Mammary epithelial cell (primary cell): ENCODE measurements at regions of chr15 and their contacts with region 1.

Region 1: DNA sequence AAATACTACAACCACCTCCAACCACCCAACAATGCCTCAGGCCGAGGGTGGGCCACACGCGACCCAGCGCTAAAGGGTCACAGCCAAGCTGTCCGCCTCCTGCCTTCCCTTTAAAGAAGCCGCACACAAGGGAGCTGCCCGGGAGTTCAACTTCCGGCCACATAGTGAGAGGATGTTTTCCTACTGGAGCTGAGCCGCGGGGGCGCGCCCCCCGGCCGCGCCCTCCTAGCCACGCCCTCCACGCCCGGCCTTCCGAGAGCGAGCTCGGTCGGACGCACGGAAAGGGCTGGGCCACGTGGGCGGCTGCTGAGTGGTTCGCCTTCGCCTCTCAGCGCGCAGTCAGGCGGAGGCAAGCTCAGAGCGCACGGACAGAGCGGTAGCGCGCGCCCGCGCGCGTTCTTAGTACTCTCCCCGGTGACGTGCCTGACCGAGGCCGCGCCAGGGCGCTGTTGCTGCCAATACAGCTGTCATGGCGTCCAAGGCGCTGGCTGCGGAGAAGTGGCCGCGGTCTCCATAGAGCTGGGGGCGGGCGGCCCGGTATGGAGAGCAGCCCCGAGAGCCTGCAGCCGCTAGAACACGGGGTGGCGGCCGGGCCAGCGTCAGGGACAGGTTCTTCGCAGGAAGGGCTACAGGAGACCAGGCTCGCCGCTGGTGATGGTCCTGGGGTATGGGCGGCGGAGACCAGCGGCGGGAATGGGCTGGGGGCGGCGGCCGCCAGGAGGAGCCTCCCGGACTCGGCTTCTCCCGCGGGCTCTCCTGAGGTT is at the start of gene MINDY2:
- DNase-seq: peak; percentile 99
- H3K4me3 ChIP-seq: peak within 1 kb of the TSS; percentile 62 to 100 (median 73)
- H3K27ac ChIP-seq: peak within 1 kb of the TSS; percentile 83
- H3K4me1 ChIP-seq: peaks cover 14% of the 10 kb centered on the region
- H3K27me3 ChIP-seq: no peaks in the 10 kb centered on the region
- CTCF ChIP-seq: peak in 1 of 2 donors; percentile 47
- total RNA-seq, gene MINDY2: 17.5 to 30.7 TPM

Region 2: GRCh38 chr15:58440158-58440910 is 330.7 kb before region 1 on chr15:
- CTCF ChIA-PET with region 1: no interaction called
- dilution Hi-C with region 1: no loop called
- in situ Hi-C with region 1: no loop called
- intact Hi-C with region 1: loop called (anchors 10 kb)
- DNase-seq: peak; percentile 52
- H3K4me3 ChIP-seq: no peak overlapping the region
- H3K27ac ChIP-seq: peak overlapping the region; percentile 93
- H3K4me1 ChIP-seq: peaks cover 36% of the 10 kb centered on the region
- H3K27me3 ChIP-seq: no peaks in the 10 kb centered on the region
- CTCF ChIP-seq: no peak

Region 3: DNA sequence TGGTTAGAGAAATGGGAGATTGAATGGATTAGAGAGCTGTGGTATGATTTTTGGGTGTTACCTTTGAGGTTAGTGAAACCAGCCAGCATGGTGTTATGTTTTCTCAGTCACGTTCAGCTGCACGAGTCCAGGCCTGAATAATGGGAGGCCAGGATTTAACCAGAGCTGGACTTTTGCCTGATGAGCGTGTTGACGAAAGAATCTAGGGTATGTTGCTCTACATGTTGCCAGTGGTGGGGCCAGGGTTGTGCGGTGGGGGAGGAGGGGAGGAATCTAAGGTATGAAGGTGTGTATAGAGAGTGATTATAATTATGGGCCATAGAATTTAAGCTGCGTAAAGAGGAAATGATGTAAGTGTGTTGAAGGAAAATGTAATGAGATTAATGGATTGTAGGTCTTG is 22.8 kb after region 1 on chr15:
- CTCF ChIA-PET with region 1: interaction called, 18 read pairs
- dilution Hi-C with region 1: no loop called
- in situ Hi-C with region 1: no loop called
- intact Hi-C with region 1: loop called (anchors 1 kb)
- DNase-seq: peak; percentile 98
- H3K4me3 ChIP-seq: peak overlapping the region in 2 of 3 experiments; percentile 23 to 31
- H3K27ac ChIP-seq: peak overlapping the region; percentile 99
- H3K4me1 ChIP-seq: peaks cover 16% of the 10 kb centered on the region
- H3K27me3 ChIP-seq: no peaks in the 10 kb centered on the region
- CTCF ChIP-seq: no peak

Region 4: DNA sequence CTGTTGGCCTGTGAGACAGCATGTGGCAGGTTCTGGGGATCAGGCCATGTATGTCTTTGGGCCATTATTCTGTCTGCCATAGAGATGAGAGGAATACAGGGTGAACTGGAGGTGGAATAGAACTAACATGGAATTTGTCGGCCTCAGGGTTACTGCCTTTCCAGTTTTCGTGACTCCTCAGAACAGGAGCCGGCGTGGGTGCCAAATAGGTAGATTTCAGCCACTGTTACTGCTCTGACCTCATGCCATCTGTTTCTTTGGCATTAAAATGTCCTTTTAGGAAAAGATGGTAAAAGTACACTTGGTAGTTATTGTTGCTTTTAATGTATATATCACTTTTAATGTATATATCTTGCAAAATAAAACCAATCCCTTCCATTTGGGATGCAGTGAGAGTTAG is 96.9 kb after region 1 on chr15:
- CTCF ChIA-PET with region 1: no interaction called
- dilution Hi-C with region 1: no loop called
- in situ Hi-C with region 1: no loop called
- intact Hi-C with region 1: loop called (anchors 2 kb)
- DNase-seq: no peak
- H3K4me3 ChIP-seq: no peak overlapping the region
- H3K27ac ChIP-seq: no peak overlapping the region
- H3K4me1 ChIP-seq: peaks cover under 1% of the 10 kb centered on the region
- H3K27me3 ChIP-seq: no peaks in the 10 kb centered on the region
- CTCF ChIP-seq: no peak